K562 (cell line): ENCODE measurements at regions of chr6 and their contacts with region 1.

Region 1: GRCh38 chr6:15245361-15246216 is at the start of gene JARID2:
- DNase-seq: peak; percentile 75 to 99 (median 88)
- ATAC-seq: peak; percentile 74
- H3K4me3 ChIP-seq: peak within 1 kb of the TSS; percentile 78
- H3K27ac ChIP-seq: peak within 1 kb of the TSS; percentile 94
- H3K4me1 ChIP-seq: peaks cover 20 to 24% of the 10 kb centered on the region in 2 experiments
- H3K27me3 ChIP-seq: no peaks in the 10 kb centered on the region
- CTCF ChIP-seq: no peak
- EP300 ChIP-seq: 0 out of 2 replicates have a peak, but pooled peaks have one; percentile 14
- POLR2A ChIP-seq: peak; percentile 86
- RAD21 ChIP-seq: no peak; a peak in 1 of 4 replicates
- polyA plus RNA-seq, gene JARID2: 5.0 to 6.7 TPM

Region 2: DNA sequence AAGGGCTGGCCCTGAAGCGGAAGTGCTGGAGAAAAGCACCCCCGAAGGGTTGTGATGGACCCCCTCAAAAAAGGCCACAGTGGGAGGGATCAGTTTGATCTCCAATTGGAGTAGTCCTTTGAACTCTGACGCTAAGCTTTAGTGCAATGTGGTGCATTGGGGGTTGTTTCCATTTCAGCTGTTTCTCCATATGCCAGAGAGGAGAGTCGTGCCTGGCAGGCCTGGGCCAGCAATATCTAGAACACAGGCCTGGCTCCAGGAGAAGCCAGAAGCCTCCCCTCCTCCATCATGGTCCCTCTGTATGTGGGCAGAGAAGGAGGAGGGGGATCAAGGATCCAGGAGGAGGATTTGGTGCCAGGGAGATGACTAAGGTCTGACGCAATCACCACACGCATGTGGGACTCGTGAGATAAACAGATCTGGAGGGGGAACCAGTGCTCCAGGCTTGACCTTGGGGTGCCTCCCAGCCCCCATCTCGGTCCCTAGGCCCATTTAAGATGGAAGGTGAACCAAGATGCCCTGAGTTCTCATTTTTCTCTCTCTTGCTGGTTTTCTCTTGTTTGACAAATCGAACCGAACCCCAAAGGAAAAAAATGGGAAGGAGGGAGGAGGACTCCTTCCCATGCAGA is 517.1 kb before region 1 on chr6:
- CTCF ChIA-PET with region 1: no interaction called
- POLR2A ChIA-PET with region 1: no interaction called
- in situ Hi-C with region 1: no loop called
- intact Hi-C with region 1: loop called (anchors 10 kb)
- DNase-seq: peak; percentile 73 to 88 (median 80)
- ATAC-seq: peak; percentile 75
- H3K4me3 ChIP-seq: no peak overlapping the region
- H3K27ac ChIP-seq: peak overlapping the region; percentile 68
- H3K4me1 ChIP-seq: peaks cover 14 to 57% of the 10 kb centered on the region in 2 experiments
- H3K27me3 ChIP-seq: no peaks in the 10 kb centered on the region
- CTCF ChIP-seq: no peak
- EP300 ChIP-seq: peak; percentile 91
- POLR2A ChIP-seq: no peak
- RAD21 ChIP-seq: peak in 1 of 2 experiments; percentile 29; a peak in 3 of 4 replicates

Region 3: GRCh38 chr6:15017261-15017660 is 228.3 kb before region 1 on chr6:
- CTCF ChIA-PET with region 1: no interaction called
- POLR2A ChIA-PET with region 1: no interaction called
- in situ Hi-C with region 1: no loop called
- intact Hi-C with region 1: loop called (anchors 5 kb)
- DNase-seq: peak; percentile 69 to 81 (median 76)
- ATAC-seq: peak; percentile 90
- H3K4me3 ChIP-seq: peak overlapping the region; percentile 8; the same call in 1 of the 2 replicates
- H3K27ac ChIP-seq: peak overlapping the region; percentile 30; the same call in 2 of the 3 replicates
- H3K4me1 ChIP-seq: peaks cover 23 to 32% of the 10 kb centered on the region in 2 experiments
- H3K27me3 ChIP-seq: no peaks in the 10 kb centered on the region
- CTCF ChIP-seq: no peak
- EP300 ChIP-seq: no peak
- POLR2A ChIP-seq: 0 out of 2 replicates have a peak, but pooled peaks have one; percentile 38
- RAD21 ChIP-seq: peak in 1 of 2 experiments; percentile 9; a peak in 1 of 4 replicates

Region 4: DNA sequence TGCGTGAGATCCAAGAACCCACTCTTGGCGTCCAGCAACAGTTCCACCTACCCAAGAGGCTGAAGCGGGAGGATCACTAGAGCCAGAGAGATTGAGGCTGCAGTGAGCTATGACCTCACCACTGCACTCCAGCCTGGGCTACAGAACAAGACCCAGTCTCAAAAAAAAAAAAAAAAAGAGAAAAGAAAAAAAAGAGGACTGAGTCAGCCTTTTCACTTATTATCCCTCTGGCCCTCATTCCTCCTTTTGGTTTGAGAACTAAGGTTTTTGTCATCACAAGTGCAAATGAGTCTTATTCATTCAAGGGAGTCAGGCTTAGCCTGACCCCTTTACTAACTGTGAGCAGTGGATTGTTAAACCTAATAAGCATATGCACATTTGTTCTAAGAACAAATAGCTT is 37.7 kb before region 1 on chr6:
- CTCF ChIA-PET with region 1: no interaction called
- POLR2A ChIA-PET with region 1: interaction called, 7 read pairs
- in situ Hi-C with region 1: no loop called
- intact Hi-C with region 1: loop called (anchors 2 kb)
- DNase-seq: peak in 1 of 4 experiments; percentile 16
- ATAC-seq: peak; percentile 10; the same call in 1 of the 3 replicates
- H3K4me3 ChIP-seq: no peak overlapping the region
- H3K27ac ChIP-seq: no peak overlapping the region
- H3K4me1 ChIP-seq: no peaks in the 10 kb centered on the region; a peak in 2 of 5 replicates
- H3K27me3 ChIP-seq: no peaks in the 10 kb centered on the region
- CTCF ChIP-seq: no peak
- EP300 ChIP-seq: no peak
- POLR2A ChIP-seq: no peak
- RAD21 ChIP-seq: no peak

Region 5: DNA sequence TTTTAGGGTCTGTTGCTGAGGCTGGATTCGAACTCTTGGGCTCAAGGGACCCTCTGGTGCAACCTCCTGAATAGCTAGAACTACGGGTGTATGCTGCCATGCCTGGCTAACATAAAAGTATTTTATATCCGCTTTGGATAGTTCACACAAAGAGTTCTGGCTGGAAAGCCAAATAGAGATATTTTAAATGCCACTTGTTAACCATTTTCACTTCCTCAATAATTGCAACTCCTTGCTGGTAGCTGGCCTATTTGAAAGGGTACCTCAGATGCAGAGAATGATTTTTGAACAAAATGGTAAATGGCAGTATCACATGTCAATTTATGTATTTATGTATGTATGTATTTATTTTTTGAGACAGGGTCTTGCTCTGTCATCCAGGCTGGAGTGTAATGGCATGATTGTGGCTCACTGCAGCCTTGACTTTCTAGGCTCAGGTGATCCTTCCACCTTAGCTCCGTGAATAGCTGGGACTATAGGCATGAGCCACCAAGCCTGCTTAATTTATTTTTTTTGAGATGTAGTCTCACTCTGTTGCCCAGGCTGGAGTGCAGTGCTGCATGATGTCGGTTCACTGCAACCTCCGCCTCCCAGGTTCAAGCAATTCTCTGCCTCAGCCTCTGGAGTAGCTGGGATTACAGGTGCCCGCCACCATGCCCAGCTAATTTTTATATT is 12.6 kb before region 1 on chr6:
- CTCF ChIA-PET with region 1: no interaction called
- POLR2A ChIA-PET with region 1: interaction called, 28 read pairs
- in situ Hi-C with region 1: no loop called
- intact Hi-C with region 1: no loop called
- DNase-seq: no peak
- ATAC-seq: no peak
- H3K4me3 ChIP-seq: no peak overlapping the region
- H3K27ac ChIP-seq: no peak overlapping the region
- H3K4me1 ChIP-seq: no peaks in the 10 kb centered on the region
- H3K27me3 ChIP-seq: no peaks in the 10 kb centered on the region
- CTCF ChIP-seq: no peak
- EP300 ChIP-seq: no peak
- POLR2A ChIP-seq: no peak
- RAD21 ChIP-seq: no peak

Region 6: GRCh38 chr6:15299430-15300131 is 54.0 kb after region 1 on chr6:
- CTCF ChIA-PET with region 1: no interaction called
- POLR2A ChIA-PET with region 1: no interaction called
- in situ Hi-C with region 1: no loop called
- intact Hi-C with region 1: loop called (anchors 2 kb)
- DNase-seq: peak; percentile 91 to 98 (median 94)
- ATAC-seq: peak; percentile 86
- H3K4me3 ChIP-seq: peak overlapping the region; percentile 0; the same call in 1 of the 2 replicates
- H3K27ac ChIP-seq: peak overlapping the region; percentile 89
- H3K4me1 ChIP-seq: peaks cover 37 to 77% of the 10 kb centered on the region in 2 experiments
- H3K27me3 ChIP-seq: no peaks in the 10 kb centered on the region
- CTCF ChIP-seq: peak in 1 of 3 experiments; percentile 18; a peak in 1 of 6 replicates
- EP300 ChIP-seq: peak; percentile 98
- POLR2A ChIP-seq: peak; percentile 69
- RAD21 ChIP-seq: peak in 1 of 2 experiments; percentile 35; a peak in 2 of 4 replicates

Region 7: GRCh38 chr6:15420959-15421438 is 175.4 kb after region 1 on chr6:
- CTCF ChIA-PET with region 1: no interaction called
- POLR2A ChIA-PET with region 1: no interaction called
- in situ Hi-C with region 1: no loop called
- intact Hi-C with region 1: no loop called
- DNase-seq: no peak
- ATAC-seq: no peak
- H3K4me3 ChIP-seq: no peak overlapping the region
- H3K27ac ChIP-seq: no peak overlapping the region
- H3K4me1 ChIP-seq: no peaks in the 10 kb centered on the region
- H3K27me3 ChIP-seq: no peaks in the 10 kb centered on the region
- CTCF ChIP-seq: no peak
- EP300 ChIP-seq: no peak
- POLR2A ChIP-seq: no peak
- RAD21 ChIP-seq: no peak

Region 8: DNA sequence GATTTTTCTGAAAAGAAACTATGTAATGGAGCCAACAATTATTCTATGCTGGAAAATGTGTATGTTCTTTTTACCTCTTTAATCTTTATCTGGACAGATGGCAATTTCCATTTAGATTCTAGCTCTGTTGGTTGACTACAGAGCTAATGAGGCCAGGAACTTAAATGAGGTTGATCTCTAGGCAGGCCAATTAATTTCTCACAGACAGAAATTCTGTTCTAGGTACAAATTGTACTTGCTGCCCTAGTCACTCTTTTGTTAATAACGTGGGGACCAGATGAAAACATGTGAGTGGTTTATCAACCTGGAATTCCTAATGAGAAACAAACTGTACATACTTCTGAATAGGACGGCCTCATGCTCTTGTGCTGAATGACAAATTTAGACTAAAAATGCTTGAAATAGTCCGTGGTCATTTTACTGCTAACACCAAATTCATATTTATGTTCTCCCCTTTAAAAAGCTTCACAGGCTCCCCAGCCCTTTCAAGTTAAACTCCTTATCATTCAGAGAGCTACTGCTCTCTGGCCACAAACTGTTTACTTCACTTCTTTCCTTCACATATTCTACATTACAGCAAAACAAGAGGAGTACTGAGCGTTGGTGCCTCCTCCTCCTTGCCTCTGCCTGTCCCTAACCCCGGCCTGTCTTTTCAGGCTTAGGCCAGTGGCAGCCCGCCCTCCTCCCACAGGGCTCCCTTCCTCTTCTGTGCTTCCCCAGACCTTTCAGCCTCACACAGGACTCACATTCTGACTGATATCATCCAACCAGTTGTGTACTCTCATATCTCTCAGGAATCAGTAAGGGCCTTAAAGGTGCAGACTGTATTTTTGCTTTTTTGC is 375.8 kb after region 1 on chr6:
- CTCF ChIA-PET with region 1: interaction called, 3 read pairs
- POLR2A ChIA-PET with region 1: interaction called, 3 read pairs
- in situ Hi-C with region 1: no loop called
- intact Hi-C with region 1: loop called (anchors 5 kb)
- DNase-seq: peak; percentile 37 to 96 (median 64)
- ATAC-seq: peak; percentile 99
- H3K4me3 ChIP-seq: no peak overlapping the region
- H3K27ac ChIP-seq: peak overlapping the region; percentile 85
- H3K4me1 ChIP-seq: peaks cover 4 to 33% of the 10 kb centered on the region in 2 experiments
- H3K27me3 ChIP-seq: no peaks in the 10 kb centered on the region
- CTCF ChIP-seq: no peak
- EP300 ChIP-seq: peak; percentile 39; the same call in 1 of the 2 replicates
- POLR2A ChIP-seq: peak; percentile 78
- RAD21 ChIP-seq: peak in 1 of 2 experiments; percentile 51; a peak in 2 of 4 replicates